IMR-90 (cell line): ENCODE measurements at regions of chr6 and their contacts with region 1.

Region 1: DNA sequence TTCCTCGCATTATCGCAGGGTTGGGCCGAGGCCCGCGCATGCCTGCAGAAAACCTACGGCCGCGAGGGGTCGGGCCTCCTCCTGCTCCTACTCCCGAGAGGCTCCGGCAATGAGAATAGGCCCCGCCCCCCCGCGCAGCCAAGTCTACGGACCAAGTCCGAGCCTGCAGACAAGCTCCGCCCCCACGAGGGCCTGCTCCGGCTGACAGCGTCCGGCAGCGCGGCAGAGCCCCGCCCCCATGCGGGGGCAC is 3.1 kb upstream of the GPSM3 start:
- DNase-seq: peak; percentile 99
- ATAC-seq: peak; percentile 92
- H3K4me3 ChIP-seq: no peak overlapping the region
- H3K27ac ChIP-seq: no peak overlapping the region
- H3K4me1 ChIP-seq: peaks cover 15% of the 10 kb centered on the region
- H3K27me3 ChIP-seq: no peaks in the 10 kb centered on the region
- CTCF ChIP-seq: peak; percentile 49
- POLR2A ChIP-seq: no peak
- RAD21 ChIP-seq: no peak

Region 2: GRCh38 chr6:32118782-32119628 is 76.6 kb before region 1 on chr6:
- CTCF ChIA-PET with region 1: interaction called, 6 read pairs
- POLR2A ChIA-PET with region 1: no interaction called
- dilution Hi-C with region 1: no loop called
- in situ Hi-C with region 1: loop called (anchors 5 kb)
- intact Hi-C with region 1: loop called (anchors 1 kb)
- DNase-seq: peak; percentile 85
- ATAC-seq: peak; percentile 78
- H3K4me3 ChIP-seq: no peak overlapping the region
- H3K27ac ChIP-seq: peak overlapping the region; percentile 36; the same call in 1 of the 2 replicates
- H3K4me1 ChIP-seq: peaks cover 11% of the 10 kb centered on the region
- H3K27me3 ChIP-seq: no peaks in the 10 kb centered on the region
- CTCF ChIP-seq: peak; percentile 98
- POLR2A ChIP-seq: peak; percentile 57; the same call in 1 of the 2 replicates
- RAD21 ChIP-seq: peak; percentile 98

Region 3: GRCh38 chr6:32127717-32128592 is 67.6 kb before region 1 on chr6 and contains the start of gene ATF6B:
- CTCF ChIA-PET with region 1: no interaction called
- POLR2A ChIA-PET with region 1: no interaction called
- dilution Hi-C with region 1: no loop called
- in situ Hi-C with region 1: no loop called
- intact Hi-C with region 1: loop called (anchors 1 kb)
- DNase-seq: peak; percentile 100
- ATAC-seq: peak; percentile 93
- H3K4me3 ChIP-seq: peak within 1 kb of the TSS; percentile 81
- H3K27ac ChIP-seq: peak within 1 kb of the TSS; percentile 95
- H3K4me1 ChIP-seq: peaks cover 8% of the 10 kb centered on the region
- H3K27me3 ChIP-seq: no peaks in the 10 kb centered on the region
- CTCF ChIP-seq: no peak
- POLR2A ChIP-seq: peak; percentile 55; the same call in 1 of the 2 replicates
- RAD21 ChIP-seq: no peak
- total RNA-seq, gene ATF6B: 5.3 and 7.9 TPM in 2 replicates

Region 4: DNA sequence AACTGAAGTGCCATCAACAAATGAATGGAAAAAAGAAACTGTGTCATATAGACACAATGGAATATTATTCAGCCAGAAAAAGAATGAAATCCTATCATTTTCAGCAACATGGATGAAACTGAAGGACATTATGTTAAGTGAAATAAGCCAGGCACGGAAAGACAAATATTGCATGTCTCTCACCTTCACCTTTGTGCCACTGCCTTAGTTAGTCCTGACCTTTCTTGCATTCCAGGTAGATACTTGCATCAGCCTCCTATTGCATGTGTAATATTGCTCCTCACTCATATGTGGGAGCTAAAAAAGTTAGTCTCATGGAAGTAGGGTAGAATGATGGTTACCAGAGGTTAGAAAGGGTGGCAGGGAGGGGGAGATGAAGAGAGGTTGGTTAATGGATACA is 13.4 kb after region 1 on chr6:
- CTCF ChIA-PET with region 1: no interaction called
- POLR2A ChIA-PET with region 1: interaction called, 15 read pairs
- dilution Hi-C with region 1: no loop called
- in situ Hi-C with region 1: no loop called
- intact Hi-C with region 1: no loop called
- DNase-seq: no peak
- ATAC-seq: no peak
- H3K4me3 ChIP-seq: no peak overlapping the region
- H3K27ac ChIP-seq: no peak overlapping the region
- H3K4me1 ChIP-seq: no peaks in the 10 kb centered on the region
- H3K27me3 ChIP-seq: peaks cover 6% of the 10 kb centered on the region; the same call in 1 of the 2 replicates
- CTCF ChIP-seq: no peak
- POLR2A ChIP-seq: no peak
- RAD21 ChIP-seq: no peak

Region 5: DNA sequence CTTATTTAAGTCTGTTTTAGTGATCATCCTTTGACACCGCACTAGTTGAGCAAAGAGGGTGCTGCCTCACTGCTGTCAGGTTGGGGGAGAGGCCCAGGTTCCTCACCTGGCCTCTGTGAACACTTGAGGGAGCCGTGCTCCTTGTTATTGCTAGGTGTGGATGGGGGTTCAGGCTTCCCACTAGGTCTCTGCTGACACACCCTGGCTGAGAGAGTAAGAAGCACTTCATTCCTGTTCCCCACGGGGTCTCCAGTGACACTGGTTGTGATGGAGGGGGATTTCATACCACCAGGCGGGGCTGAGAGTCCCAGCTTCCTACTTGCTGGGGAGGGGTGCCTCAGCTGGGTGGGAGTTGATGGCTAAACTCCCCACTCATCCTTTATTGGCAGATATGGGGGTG is 39.4 kb after region 1 on chr6:
- CTCF ChIA-PET with region 1: no interaction called
- POLR2A ChIA-PET with region 1: no interaction called
- dilution Hi-C with region 1: no loop called
- in situ Hi-C with region 1: no loop called
- intact Hi-C with region 1: no loop called
- DNase-seq: no peak
- ATAC-seq: no peak
- H3K4me3 ChIP-seq: no peak overlapping the region
- H3K27ac ChIP-seq: no peak overlapping the region
- H3K4me1 ChIP-seq: no peaks in the 10 kb centered on the region
- H3K27me3 ChIP-seq: peaks cover 2% of the 10 kb centered on the region
- CTCF ChIP-seq: no peak
- POLR2A ChIP-seq: no peak
- RAD21 ChIP-seq: no peak

Region 6: GRCh38 chr6:32255199-32256153 is 59.9 kb after region 1 on chr6:
- CTCF ChIA-PET with region 1: no interaction called
- POLR2A ChIA-PET with region 1: no interaction called
- dilution Hi-C with region 1: no loop called
- in situ Hi-C with region 1: no loop called
- intact Hi-C with region 1: loop called (anchors 1 kb)
- DNase-seq: peak; percentile 93
- ATAC-seq: peak; percentile 97
- H3K4me3 ChIP-seq: peak overlapping the region; percentile 20
- H3K27ac ChIP-seq: peak overlapping the region; percentile 81
- H3K4me1 ChIP-seq: peaks cover 4% of the 10 kb centered on the region
- H3K27me3 ChIP-seq: no peaks in the 10 kb centered on the region
- CTCF ChIP-seq: peak; percentile 62
- POLR2A ChIP-seq: 0 out of 2 replicates have a peak, but pooled peaks have one; percentile 25
- RAD21 ChIP-seq: peak; percentile 37; the same call in 1 of the 2 replicates